ENCODE measurements at regions of chr20 and their contacts with region 1.

Region 1: GRCh38 chr20:58850693-58851174 is at the start of gene GNAS-AS1:
- DNase-seq: no peak
- H3K4me3 ChIP-seq: peak within 1 kb of the TSS; percentile 56 to 63 (median 61)
- H3K27ac ChIP-seq: no peak within 1 kb of the TSS
- H3K4me1 ChIP-seq: peaks cover 2% of the 10 kb centered on the region
- H3K27me3 ChIP-seq: peaks cover 41% of the 10 kb centered on the region
- CTCF ChIP-seq: no peak
- polyA plus RNA-seq, gene GNAS-AS1: 0.25 to 0.37 TPM (median 0.31 TPM) in 3 replicates

Region 2: GRCh38 chr20:59222253-59223181 is 371.8 kb after region 1 on chr20:
- dilution Hi-C with region 1: loop called (anchors 25 kb)
- DNase-seq: no peak
- H3K4me3 ChIP-seq: peak overlapping the region; percentile 12 to 71 (median 39)
- H3K27ac ChIP-seq: no peak overlapping the region
- H3K4me1 ChIP-seq: no peaks in the 10 kb centered on the region
- H3K27me3 ChIP-seq: peaks cover 44% of the 10 kb centered on the region
- CTCF ChIP-seq: peak; percentile 81 to 94 (median 85)